ENCODE measurements at regions of chr4 and their contacts with region 1.

Region 1: GRCh38 chr4:76515975-76516843 is 81.2 kb downstream of the SHROOM3 start:
- DNase-seq: no peak
- H3K4me3 ChIP-seq: no peak overlapping the region
- H3K27ac ChIP-seq: no peak overlapping the region
- H3K4me1 ChIP-seq: no peaks in the 10 kb centered on the region
- H3K27me3 ChIP-seq: no peaks in the 10 kb centered on the region
- CTCF ChIP-seq: no peak

Region 2: GRCh38 chr4:76401654-76402053 is 114.6 kb before region 1 on chr4:
- CTCF ChIA-PET with region 1: no interaction called
- dilution Hi-C with region 1: no loop called
- in situ Hi-C with region 1: no loop called
- intact Hi-C with region 1: no loop called
- DNase-seq: no peak
- H3K4me3 ChIP-seq: no peak overlapping the region
- H3K27ac ChIP-seq: no peak overlapping the region
- H3K4me1 ChIP-seq: no peaks in the 10 kb centered on the region
- H3K27me3 ChIP-seq: peaks cover 2% of the 10 kb centered on the region
- CTCF ChIP-seq: no peak

Region 3: DNA sequence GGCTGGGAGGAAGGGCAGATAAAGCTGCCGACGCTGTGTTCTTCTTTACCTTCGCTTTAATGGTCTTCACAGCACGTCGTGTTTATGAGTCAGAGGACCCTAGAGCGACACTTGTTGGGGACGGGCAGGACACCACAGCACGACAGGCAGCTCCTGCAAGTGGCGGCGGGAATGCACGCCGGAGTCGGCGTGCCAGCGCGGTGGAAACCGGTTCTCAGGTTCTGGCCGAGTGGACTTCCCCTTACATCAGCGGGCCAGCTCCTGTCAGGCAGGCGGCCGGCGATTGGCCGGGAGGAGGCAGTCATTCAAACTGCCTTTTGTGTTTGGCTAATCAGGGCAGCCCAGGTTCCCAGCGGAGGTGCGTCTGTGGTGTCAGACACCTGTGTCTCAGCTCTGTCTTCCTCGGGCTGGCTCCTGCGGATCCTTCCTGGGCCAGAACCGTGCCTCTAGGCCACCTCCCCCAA is 69.7 kb after region 1 on chr4:
- CTCF ChIA-PET with region 1: no interaction called
- dilution Hi-C with region 1: no loop called
- in situ Hi-C with region 1: no loop called
- intact Hi-C with region 1: loop called (anchors 5 kb)
- DNase-seq: peak; percentile 95
- H3K4me3 ChIP-seq: peak overlapping the region; percentile 67 to 77 (median 67)
- H3K27ac ChIP-seq: peak overlapping the region; percentile 79
- H3K4me1 ChIP-seq: peaks cover 34% of the 10 kb centered on the region
- H3K27me3 ChIP-seq: no peaks in the 10 kb centered on the region
- CTCF ChIP-seq: peak in 1 of 2 donors; percentile 42

Region 4: DNA sequence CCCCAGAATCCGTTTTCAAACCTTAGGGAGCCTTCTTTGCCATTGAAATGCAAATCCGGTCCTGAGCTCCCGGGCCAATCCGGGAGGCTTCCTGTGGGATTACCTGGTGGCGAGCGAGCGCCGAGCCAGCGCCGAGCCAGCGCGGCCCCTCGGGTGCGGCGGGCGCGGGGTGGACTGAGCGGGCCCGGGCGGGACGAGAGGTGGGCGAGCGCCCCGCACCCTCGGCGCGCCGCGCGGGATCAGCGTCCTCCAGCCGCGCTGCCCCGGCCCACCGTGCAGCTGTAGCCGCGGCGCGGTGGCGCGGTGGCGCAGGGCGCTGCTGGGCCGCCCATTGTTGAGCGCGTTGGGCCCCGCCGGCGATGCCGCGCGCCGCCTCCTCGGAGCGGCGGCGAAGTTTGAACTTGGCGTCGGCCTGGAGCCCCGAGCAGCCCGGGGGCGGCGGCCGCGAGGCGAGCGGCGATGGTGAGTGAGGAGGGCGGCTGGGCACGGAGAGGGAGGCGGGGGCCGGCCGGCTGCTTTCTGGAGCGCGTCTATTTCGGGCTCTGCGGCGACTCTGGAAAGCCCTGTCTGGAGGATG is 173.1 kb after region 1 on chr4:
- CTCF ChIA-PET with region 1: no interaction called
- dilution Hi-C with region 1: no loop called
- in situ Hi-C with region 1: no loop called
- intact Hi-C with region 1: loop called (anchors 1 kb)
- DNase-seq: peak; percentile 68
- H3K4me3 ChIP-seq: peak overlapping the region; percentile 69 to 95 (median 77)
- H3K27ac ChIP-seq: peak overlapping the region; percentile 91
- H3K4me1 ChIP-seq: peaks cover 42% of the 10 kb centered on the region
- H3K27me3 ChIP-seq: no peaks in the 10 kb centered on the region
- CTCF ChIP-seq: no peak

Region 5: DNA sequence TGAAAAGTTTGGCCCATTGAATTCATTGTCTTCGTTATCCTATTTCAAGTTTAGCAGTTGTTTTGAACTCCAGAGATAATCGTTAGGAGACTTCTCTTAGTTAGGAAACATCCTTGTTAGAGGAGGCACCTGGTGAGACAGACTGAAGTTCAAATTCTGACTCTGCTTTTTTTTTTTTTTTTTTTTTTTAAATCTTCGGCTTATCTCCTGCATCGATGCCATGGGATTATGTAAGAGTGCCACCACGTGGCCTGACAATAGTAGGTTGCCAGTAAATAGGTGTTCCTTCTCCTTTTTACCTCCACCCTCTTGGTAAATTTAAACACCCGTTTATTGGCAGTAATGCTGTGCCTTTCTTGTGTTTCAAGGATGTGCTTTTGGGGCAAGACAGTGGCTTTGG is 232.4 kb after region 1 on chr4:
- CTCF ChIA-PET with region 1: no interaction called
- dilution Hi-C with region 1: no loop called
- in situ Hi-C with region 1: loop called in 1 of 2 experiments (anchors 5 kb)
- intact Hi-C with region 1: loop called (anchors 1 kb)
- DNase-seq: no peak
- H3K4me3 ChIP-seq: no peak overlapping the region
- H3K27ac ChIP-seq: no peak overlapping the region
- H3K4me1 ChIP-seq: peaks cover 34% of the 10 kb centered on the region
- H3K27me3 ChIP-seq: no peaks in the 10 kb centered on the region
- CTCF ChIP-seq: peak; percentile 32 to 48

Region 6: DNA sequence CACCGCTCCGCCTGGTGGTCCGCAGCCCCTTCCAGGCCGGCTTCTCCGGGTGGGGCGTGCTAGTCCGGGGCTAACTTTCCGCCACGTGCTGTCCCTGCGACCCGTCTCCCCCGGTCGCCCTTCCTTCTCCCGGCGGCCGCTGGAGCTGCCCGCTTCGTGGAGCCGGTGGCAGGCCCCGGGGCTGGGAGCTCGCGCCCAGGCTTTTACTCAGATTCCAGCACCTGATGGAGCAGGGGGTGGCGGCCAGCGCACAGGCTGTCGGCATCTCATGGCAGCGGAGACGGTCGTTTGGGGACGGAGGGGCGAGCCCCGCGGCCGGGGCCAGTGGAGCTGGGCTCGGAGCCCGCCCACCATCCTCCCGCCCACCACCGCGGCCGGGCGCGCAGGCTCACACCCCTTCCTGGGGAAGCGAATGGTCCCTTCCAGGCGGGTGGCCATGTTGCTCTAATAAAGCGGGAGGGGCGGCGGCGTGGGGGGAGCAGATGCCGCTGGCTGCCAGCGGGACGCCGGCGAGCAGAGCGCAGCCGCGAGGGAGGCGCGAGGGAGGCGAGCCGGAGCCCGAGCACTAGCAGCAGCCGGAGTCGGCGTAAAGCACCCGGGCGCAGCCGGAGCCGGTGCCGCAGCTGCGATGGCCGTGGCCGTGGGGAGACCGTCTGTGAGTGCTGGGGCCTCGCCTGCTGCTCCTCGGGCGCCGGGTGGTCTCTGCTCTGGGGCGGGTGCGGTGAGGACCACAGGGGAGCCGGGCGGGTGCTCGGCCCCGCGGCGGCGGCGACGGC is 433.3 kb after region 1 on chr4 and contains the start of gene SEPTIN11:
- CTCF ChIA-PET with region 1: no interaction called
- dilution Hi-C with region 1: no loop called
- in situ Hi-C with region 1: no loop called
- intact Hi-C with region 1: loop called (anchors 5 kb)
- DNase-seq: peak; percentile 92
- H3K4me3 ChIP-seq: peak within 1 kb of the TSS; percentile 61 to 80 (median 70)
- H3K27ac ChIP-seq: peak within 1 kb of the TSS; percentile 80
- H3K4me1 ChIP-seq: peaks cover 19% of the 10 kb centered on the region
- H3K27me3 ChIP-seq: no peaks in the 10 kb centered on the region
- CTCF ChIP-seq: no peak
- total RNA-seq, gene SEPTIN11: 156 to 188 TPM

Region 7: DNA sequence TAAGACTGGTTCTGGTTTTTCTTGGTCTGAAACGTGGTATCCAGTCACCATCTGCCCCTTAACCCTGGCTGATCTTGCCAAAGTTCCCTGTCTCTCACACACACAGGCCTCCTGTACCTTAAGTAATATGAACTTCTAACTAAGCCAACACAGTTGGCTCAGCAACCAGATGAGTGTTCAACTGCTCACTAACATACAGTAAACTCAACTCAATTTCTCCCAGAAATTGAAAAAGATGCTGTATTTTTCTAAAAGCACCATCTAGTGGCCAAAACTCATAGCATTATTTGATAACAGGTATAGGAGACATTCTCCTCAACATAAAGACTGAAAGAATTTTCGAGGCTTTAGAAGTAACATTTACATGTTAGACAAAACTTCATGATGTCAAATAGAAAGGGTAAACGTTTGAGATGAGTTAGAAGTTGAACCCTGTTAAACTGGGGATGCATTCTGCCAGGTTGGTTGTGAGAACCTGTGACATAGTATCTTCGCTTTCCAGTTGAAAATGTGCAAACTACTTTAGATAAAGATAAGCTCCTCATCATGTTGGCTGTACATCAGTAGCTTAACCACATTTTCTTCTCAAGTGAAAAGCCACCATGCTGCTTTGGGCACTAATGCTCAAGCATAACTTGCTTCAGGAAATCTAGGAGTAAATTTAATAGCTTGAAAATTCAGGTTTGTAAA is 528.4 kb after region 1 on chr4:
- CTCF ChIA-PET with region 1: no interaction called
- dilution Hi-C with region 1: no loop called
- in situ Hi-C with region 1: loop called (anchors 5 to 25 kb)
- intact Hi-C with region 1: loop called (anchors 1 kb)
- DNase-seq: peak; percentile 39
- H3K4me3 ChIP-seq: no peak overlapping the region
- H3K27ac ChIP-seq: no peak overlapping the region
- H3K4me1 ChIP-seq: peaks cover 10% of the 10 kb centered on the region
- H3K27me3 ChIP-seq: no peaks in the 10 kb centered on the region
- CTCF ChIP-seq: peak; percentile 63 to 64

Measured in mammary epithelial cell (primary cell).